HEK293 (cell line): ENCODE measurements at regions of chr1 and their contacts with region 1.

Region 1: GRCh38 chr1:186315570-186315969 is 59.5 kb downstream of the TPR start:
- H3K4me3 ChIP-seq: no peak overlapping the region
- H3K27ac ChIP-seq: no peak overlapping the region
- H3K4me1 ChIP-seq: no peaks in the 10 kb centered on the region
- CTCF ChIP-seq: no peak

Region 2: DNA sequence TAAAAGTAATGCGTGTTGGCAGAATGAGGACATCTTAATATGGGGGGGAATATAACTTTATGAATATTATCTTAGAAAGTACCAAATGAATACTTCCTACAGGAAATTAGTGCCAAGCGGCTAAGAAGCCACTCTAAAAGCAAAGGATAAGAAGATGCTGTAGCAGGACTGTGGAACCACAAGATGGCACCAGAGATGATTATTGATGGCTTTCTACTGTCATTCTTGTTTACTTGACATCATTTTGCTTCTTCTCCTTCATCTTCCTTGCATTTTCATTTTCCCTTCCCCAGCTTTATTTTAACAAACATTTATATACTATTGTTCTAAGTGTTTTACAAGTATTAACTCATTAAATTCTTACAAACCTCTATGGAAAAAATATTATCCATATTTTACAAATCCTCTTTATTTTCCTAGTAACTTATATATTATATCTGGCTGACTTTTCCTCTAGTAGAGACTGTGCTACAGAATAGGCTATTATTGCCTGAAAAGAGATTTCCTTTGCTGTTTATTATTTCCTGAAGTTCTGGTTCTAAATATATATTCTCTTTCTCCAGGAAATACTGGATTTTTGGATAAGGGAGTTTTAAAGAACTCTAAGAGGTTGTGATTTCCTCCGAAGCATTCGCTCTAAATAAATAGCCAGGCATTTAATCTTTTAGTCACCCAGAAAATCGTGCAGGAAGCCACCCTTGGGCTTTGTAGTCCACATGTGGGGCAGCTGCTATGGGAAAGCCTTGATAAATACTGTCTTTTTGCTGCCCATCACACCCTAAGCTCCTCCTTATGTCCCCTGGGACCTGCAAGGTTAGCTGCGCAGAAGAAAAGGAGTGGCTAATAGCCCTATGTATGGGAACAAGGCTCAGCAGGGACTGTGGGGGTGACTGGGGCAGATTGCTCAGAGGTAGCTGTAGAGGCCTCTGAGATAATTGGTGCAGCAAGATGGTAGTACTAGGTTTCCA is 10.3 kb before region 1 on chr1:
- CTCF ChIA-PET with region 1: interaction called, 10 read pairs
- POLR2A ChIA-PET with region 1: no interaction called
- H3K4me3 ChIP-seq: no peak overlapping the region
- H3K27ac ChIP-seq: no peak overlapping the region
- H3K4me1 ChIP-seq: no peaks in the 10 kb centered on the region
- CTCF ChIP-seq: 0 out of 2 replicates have a peak, but pooled peaks have one; percentile 10